ENCODE measurements at regions of chr15 and their contacts with region 1.

Region 1: GRCh38 chr15:28049581-28049980 is 49.5 kb downstream of the OCA2 start:
- DNase-seq: no peak
- ATAC-seq: no peak
- H3K4me3 ChIP-seq: no peak overlapping the region
- H3K27ac ChIP-seq: no peak overlapping the region
- H3K4me1 ChIP-seq: no peaks in the 10 kb centered on the region
- H3K27me3 ChIP-seq: no peaks in the 10 kb centered on the region
- CTCF ChIP-seq: no peak
- POLR2A ChIP-seq: no peak
- RAD21 ChIP-seq: no peak

Region 2: DNA sequence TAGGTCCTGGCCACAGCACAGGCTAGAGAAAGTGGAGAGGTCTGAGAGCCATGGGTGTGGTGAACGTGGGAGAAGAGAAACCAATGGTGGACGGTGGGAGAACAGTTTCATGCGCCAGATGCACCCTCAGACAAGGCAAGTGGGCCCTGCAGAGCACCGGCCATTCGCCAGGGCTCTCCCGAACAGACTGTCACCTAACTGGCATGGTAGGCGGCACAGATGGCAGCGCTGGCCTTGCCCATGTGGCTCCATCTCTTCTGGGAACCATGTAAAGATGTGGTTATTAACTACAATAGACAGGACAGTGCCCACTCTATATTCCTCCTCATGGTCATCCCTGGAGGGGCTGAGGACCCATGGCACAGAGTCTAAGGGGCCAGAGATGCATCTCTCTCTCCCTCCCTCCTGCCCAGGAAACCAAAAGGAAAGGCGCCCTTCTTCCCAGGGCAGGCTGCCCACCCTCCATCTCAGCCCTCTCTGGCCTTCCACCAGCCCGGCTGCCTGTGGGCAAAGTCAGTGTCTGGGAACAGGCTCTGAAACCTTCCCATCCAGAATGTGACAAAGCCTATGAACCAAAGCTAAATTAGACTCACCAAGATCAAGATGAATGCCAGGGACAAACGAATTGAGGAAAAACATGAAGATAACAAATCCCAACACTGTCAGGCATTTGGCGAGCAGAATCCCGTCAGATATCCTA is 98.2 kb before region 1 on chr15:
- CTCF ChIA-PET with region 1: no interaction called
- POLR2A ChIA-PET with region 1: no interaction called
- RAD21 ChIA-PET with region 1: no interaction called
- intact Hi-C with region 1: no loop called
- DNase-seq: no peak
- ATAC-seq: no peak
- H3K4me3 ChIP-seq: no peak overlapping the region
- H3K27ac ChIP-seq: no peak overlapping the region
- H3K4me1 ChIP-seq: no peaks in the 10 kb centered on the region
- H3K27me3 ChIP-seq: no peaks in the 10 kb centered on the region
- CTCF ChIP-seq: no peak
- POLR2A ChIP-seq: no peak
- RAD21 ChIP-seq: no peak

Region 3: DNA sequence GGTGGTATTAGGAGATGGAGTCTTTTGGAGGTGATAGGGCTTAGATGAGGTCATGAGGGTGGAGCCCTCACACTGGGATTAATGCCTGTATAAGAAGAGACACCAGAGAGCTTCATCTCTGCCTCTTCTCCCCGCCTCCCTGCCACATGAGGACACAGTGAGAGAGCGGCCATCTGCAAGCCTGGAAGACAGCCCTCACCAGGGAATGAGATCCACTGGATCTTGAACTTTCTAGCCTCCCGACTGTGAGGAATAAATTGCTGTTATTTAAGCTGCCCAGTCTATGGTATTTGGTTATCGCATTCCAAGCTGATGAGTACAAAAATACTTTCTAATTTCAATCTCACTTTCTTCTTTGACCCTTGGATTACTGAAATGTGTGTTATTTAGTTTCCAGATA is 71.9 kb before region 1 on chr15:
- CTCF ChIA-PET with region 1: no interaction called
- POLR2A ChIA-PET with region 1: no interaction called
- RAD21 ChIA-PET with region 1: no interaction called
- intact Hi-C with region 1: loop called (anchors 2 kb)
- DNase-seq: no peak
- ATAC-seq: no peak
- H3K4me3 ChIP-seq: no peak overlapping the region
- H3K27ac ChIP-seq: no peak overlapping the region
- H3K4me1 ChIP-seq: no peaks in the 10 kb centered on the region
- H3K27me3 ChIP-seq: no peaks in the 10 kb centered on the region
- CTCF ChIP-seq: no peak
- POLR2A ChIP-seq: no peak
- RAD21 ChIP-seq: no peak

Measured in HCT116 (cell line).